ENCODE measurements at regions of chr9 and their contacts with region 1.

Region 1: DNA sequence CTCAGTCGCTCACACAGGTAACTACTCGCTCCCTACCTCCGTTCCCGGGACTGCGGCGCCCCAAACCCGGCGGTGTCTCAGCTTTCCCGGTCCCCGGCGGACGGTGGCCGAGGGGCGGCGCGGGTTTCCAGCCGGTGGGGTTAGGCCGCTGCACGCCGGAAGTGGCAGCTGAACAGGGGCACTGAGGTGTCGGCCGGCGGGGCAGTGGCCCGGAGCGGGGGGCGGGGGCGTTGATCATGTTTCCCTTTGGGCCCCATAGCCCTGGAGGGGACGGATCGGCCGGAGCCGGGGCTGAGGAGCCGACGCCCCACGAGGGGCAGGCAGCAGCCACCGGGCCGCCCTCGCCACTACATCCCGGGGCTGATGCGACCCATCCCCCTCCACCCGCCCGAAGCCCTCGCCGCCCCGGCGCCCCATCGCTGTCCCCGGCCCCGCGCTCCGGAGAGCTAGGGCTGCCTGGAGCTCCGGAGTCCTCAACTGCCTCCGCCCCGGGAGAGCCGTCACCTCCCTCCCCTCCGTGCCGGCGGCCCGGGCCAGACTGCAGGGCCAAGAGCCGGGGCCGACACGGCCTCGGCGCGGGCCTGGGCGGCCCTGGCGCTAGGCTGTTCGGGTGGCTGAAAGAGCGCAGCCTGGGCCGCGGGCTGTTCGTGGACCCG is at the start of gene DCAF10:
- DNase-seq: peak; percentile 88
- H3K4me3 Mint-ChIP-seq: peak within 1 kb of the TSS; percentile 90
- H3K27ac Mint-ChIP-seq: peak within 1 kb of the TSS; percentile 80
- H3K4me1 Mint-ChIP-seq: peaks cover 39% of the 10 kb centered on the region
- H3K27me3 Mint-ChIP-seq: no peaks in the 10 kb centered on the region
- total RNA-seq, gene DCAF10: 18.5 and 19.4 TPM in 2 replicates

Region 2: GRCh38 chr9:37753489-37754190 is 47.1 kb before region 1 on chr9 and contains the start of gene TRMT10B:
- intact Hi-C with region 1: loop called (anchors 1 kb)
- DNase-seq: peak; percentile 65
- H3K4me3 Mint-ChIP-seq: peak within 1 kb of the TSS; percentile 95
- H3K27ac Mint-ChIP-seq: peak within 1 kb of the TSS; percentile 82
- H3K4me1 Mint-ChIP-seq: peaks cover 27% of the 10 kb centered on the region
- H3K27me3 Mint-ChIP-seq: no peaks in the 10 kb centered on the region
- total RNA-seq, gene TRMT10B: 10.0 and 11.8 TPM in 2 replicates

Region 3: DNA sequence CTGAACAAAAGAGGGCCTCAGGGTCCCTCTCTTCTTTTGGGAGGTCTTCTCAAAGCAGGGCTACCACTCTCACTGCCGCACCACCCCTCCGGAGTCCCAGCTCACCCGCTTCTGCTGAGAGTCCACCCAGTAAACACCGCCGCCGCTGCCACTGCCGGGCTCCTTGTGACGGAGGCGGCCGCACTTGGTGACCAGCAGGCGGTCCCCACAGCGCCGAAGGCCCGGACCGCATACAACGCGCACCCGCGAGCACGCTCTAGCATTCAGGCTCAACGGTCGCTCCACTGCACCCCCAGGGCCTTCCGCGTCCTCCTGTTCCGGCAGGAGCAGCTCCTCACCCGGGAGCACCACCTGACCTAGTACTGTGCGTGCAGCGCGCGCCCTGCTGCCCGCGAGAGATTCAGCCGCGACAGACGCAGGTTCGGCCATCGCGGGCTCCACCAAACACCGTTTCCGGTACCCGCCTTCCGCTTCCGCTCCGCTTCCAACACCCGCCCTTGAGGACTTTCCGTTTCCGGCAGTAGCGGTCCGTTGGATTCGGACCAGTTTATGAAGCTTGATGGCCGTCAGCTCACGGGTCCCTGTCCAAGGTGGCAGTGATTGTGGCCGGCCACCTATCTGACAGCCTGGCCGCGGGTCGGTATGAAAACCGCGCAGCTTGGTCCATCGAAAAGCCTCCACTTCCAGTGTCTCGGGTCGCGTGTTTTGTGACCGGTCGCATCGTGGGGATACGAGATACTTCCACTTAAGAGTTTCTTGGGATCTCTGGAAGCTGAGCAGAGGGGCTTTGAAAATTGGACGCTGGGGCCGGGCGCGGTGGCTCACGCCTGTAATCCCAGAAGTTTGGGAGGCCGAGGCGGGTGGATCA is 15.9 kb before region 1 on chr9 and contains the start of gene EXOSC3:
- intact Hi-C with region 1: loop called (anchors 1 kb)
- DNase-seq: peak; percentile 85
- H3K4me3 Mint-ChIP-seq: peak within 1 kb of the TSS; percentile 99
- H3K27ac Mint-ChIP-seq: peak within 1 kb of the TSS; percentile 97
- H3K4me1 Mint-ChIP-seq: peaks cover 40% of the 10 kb centered on the region
- H3K27me3 Mint-ChIP-seq: no peaks in the 10 kb centered on the region
- total RNA-seq, gene EXOSC3: 94.8 and 116 TPM in 2 replicates

Region 4: GRCh38 chr9:37953775-37954437 is 153.1 kb after region 1 on chr9:
- intact Hi-C with region 1: no loop called
- DNase-seq: peak; percentile 15
- H3K4me3 Mint-ChIP-seq: peak overlapping the region; percentile 27
- H3K27ac Mint-ChIP-seq: peak overlapping the region; percentile 81
- H3K4me1 Mint-ChIP-seq: peaks cover 38% of the 10 kb centered on the region
- H3K27me3 Mint-ChIP-seq: no peaks in the 10 kb centered on the region

Measured in activated T-helper 1 cell treated with anti-CD3 and anti-CD28 coated beads, Interleukin-12 subunit alpha, Interleukin-12 subunit beta, Interleukin-2, Interleukin-4 antibody, amounts not matched to agents 30 ng/mL and 10 ng/mL and 1 ng/mL, durations not matched to agents 14 hours and 24 hours and 36 hours (primary cell).